Caco-2 (cell line): ENCODE measurements at regions of chr3 and their contacts with region 1.

Region 1: GRCh38 chr3:97658668-97659285 is 105.8 kb upstream of the ARL6 start:
- DNase-seq: peak in 1 of 2 experiments; percentile 4
- H3K4me3 ChIP-seq: no peak overlapping the region
- H3K4me3 Mint-ChIP-seq: no peak overlapping the region
- H3K27ac Mint-ChIP-seq: no peak overlapping the region
- H3K4me1 ChIP-seq: no peaks in the 10 kb centered on the region
- H3K4me1 Mint-ChIP-seq: no peaks in the 10 kb centered on the region
- H3K27me3 ChIP-seq: no peaks in the 10 kb centered on the region
- H3K27me3 Mint-ChIP-seq: no peaks in the 10 kb centered on the region
- CTCF ChIP-seq: peak; percentile 61 to 66

Region 2: GRCh38 chr3:97278506-97278905 is 380.3 kb before region 1 on chr3:
- CTCF ChIA-PET with region 1: no interaction called
- POLR2A ChIA-PET with region 1: no interaction called
- intact Hi-C with region 1: loop called (anchors 1 kb)
- DNase-seq: no peak
- H3K4me3 ChIP-seq: no peak overlapping the region
- H3K4me3 Mint-ChIP-seq: no peak overlapping the region
- H3K27ac Mint-ChIP-seq: no peak overlapping the region
- H3K4me1 ChIP-seq: no peaks in the 10 kb centered on the region
- H3K4me1 Mint-ChIP-seq: no peaks in the 10 kb centered on the region
- H3K27me3 ChIP-seq: no peaks in the 10 kb centered on the region; the same call in 1 of the 2 replicates
- H3K27me3 Mint-ChIP-seq: no peaks in the 10 kb centered on the region
- CTCF ChIP-seq: peak in 1 of 2 experiments; percentile 11

Region 3: GRCh38 chr3:97481416-97481815 is 177.4 kb before region 1 on chr3:
- CTCF ChIA-PET with region 1: no interaction called
- POLR2A ChIA-PET with region 1: no interaction called
- intact Hi-C with region 1: no loop called
- DNase-seq: no peak
- H3K4me3 ChIP-seq: no peak overlapping the region
- H3K4me3 Mint-ChIP-seq: no peak overlapping the region
- H3K27ac Mint-ChIP-seq: no peak overlapping the region
- H3K4me1 ChIP-seq: no peaks in the 10 kb centered on the region
- H3K4me1 Mint-ChIP-seq: no peaks in the 10 kb centered on the region
- H3K27me3 ChIP-seq: no peaks in the 10 kb centered on the region
- H3K27me3 Mint-ChIP-seq: no peaks in the 10 kb centered on the region
- CTCF ChIP-seq: no peak

Region 4: GRCh38 chr3:97579365-97579764 is 79.4 kb before region 1 on chr3:
- CTCF ChIA-PET with region 1: no interaction called
- POLR2A ChIA-PET with region 1: no interaction called
- intact Hi-C with region 1: loop called (anchors 5 kb)
- DNase-seq: no peak
- H3K4me3 ChIP-seq: no peak overlapping the region
- H3K4me3 Mint-ChIP-seq: no peak overlapping the region
- H3K27ac Mint-ChIP-seq: no peak overlapping the region
- H3K4me1 ChIP-seq: no peaks in the 10 kb centered on the region
- H3K4me1 Mint-ChIP-seq: no peaks in the 10 kb centered on the region
- H3K27me3 ChIP-seq: no peaks in the 10 kb centered on the region
- H3K27me3 Mint-ChIP-seq: peaks cover 2% of the 10 kb centered on the region
- CTCF ChIP-seq: no peak

Region 5: GRCh38 chr3:97736928-97737327 is 78.2 kb after region 1 on chr3:
- CTCF ChIA-PET with region 1: no interaction called
- POLR2A ChIA-PET with region 1: no interaction called
- intact Hi-C with region 1: no loop called
- DNase-seq: no peak
- H3K4me3 ChIP-seq: no peak overlapping the region
- H3K4me3 Mint-ChIP-seq: no peak overlapping the region
- H3K27ac Mint-ChIP-seq: no peak overlapping the region
- H3K4me1 ChIP-seq: no peaks in the 10 kb centered on the region
- H3K4me1 Mint-ChIP-seq: no peaks in the 10 kb centered on the region
- H3K27me3 ChIP-seq: no peaks in the 10 kb centered on the region
- H3K27me3 Mint-ChIP-seq: peaks cover 2% of the 10 kb centered on the region
- CTCF ChIP-seq: no peak